ENCODE measurements at regions of chr1 and their contacts with region 1.

Region 1: DNA sequence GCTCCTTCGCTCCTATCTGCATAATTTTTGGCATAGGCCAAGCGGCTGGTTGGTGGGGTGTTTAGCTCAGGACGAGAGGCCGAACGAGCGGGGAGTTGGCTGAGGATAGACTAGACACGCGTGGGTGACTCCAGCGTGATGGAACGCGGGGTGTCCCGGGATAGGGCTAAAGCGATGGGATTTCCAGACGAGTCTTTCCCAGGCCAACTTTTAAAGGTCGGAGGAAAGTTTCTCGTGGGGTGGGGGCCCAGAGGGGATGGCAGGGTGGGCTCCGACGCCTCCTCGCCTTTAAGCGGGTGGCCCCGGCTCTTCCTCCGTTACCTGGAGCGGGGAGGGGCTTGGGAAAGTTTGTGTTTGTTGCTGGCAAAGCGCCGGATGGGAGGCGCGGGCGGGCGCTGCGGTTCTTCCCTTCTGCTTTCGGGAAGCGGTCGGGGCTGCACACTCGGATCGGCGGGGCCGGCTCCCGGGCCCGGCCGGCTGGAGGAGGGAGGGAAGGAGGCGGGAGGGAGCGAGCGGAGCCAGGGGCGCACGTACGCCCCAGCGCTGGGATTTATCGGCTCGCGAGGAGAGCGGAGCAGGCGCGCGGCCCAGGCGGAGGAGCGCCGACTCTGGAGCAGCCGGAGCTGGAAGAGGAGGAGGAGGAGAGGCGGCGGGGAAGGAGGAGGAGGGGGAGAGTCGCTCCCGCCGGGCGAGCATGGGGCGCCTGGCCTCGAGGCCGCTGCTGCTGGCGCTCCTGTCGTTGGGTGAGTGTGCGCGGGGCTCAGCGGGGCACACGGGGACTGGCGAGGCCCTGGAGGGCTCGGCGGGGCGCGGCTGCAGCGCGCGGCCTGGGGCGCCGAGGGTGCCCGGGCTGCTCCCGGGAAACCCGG is at the start of gene PTGFRN:
- DNase-seq: peak; percentile 65
- H3K4me3 Mint-ChIP-seq: no peak within 1 kb of the TSS
- H3K27ac Mint-ChIP-seq: peak within 1 kb of the TSS; percentile 62
- H3K4me1 Mint-ChIP-seq: no peaks in the 10 kb centered on the region
- H3K27me3 Mint-ChIP-seq: no peaks in the 10 kb centered on the region
- CTCF ChIP-seq: no peak
- total RNA-seq, gene PTGFRN: 29.4 and 44.6 TPM in 2 replicates

Region 2: DNA sequence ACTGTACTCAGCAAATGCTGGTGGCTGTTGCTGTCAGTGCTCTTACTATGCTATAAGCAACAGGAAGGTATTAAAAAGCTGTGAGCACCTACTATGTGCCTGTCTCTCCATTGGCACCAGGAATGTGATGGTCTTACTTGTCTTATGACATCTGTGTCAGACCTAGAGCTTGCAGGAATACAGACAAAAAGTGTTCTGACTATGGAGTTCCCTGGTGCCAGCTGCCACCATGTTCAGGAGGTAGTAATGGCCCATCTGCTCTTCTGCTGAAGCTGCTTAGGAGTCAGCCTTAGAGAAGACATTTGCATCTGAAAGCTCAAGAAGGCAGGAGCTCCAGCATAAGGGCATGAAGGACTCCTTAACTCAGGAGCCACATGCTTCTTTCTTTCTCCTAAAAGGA is 746.2 kb before region 1 on chr1:
- CTCF ChIA-PET with region 1: interaction called, 10 read pairs
- intact Hi-C with region 1: no loop called
- DNase-seq: no peak
- H3K4me3 Mint-ChIP-seq: no peak overlapping the region
- H3K27ac Mint-ChIP-seq: no peak overlapping the region
- H3K4me1 Mint-ChIP-seq: peaks cover under 1% of the 10 kb centered on the region
- H3K27me3 Mint-ChIP-seq: no peaks in the 10 kb centered on the region
- CTCF ChIP-seq: no peak

Region 3: DNA sequence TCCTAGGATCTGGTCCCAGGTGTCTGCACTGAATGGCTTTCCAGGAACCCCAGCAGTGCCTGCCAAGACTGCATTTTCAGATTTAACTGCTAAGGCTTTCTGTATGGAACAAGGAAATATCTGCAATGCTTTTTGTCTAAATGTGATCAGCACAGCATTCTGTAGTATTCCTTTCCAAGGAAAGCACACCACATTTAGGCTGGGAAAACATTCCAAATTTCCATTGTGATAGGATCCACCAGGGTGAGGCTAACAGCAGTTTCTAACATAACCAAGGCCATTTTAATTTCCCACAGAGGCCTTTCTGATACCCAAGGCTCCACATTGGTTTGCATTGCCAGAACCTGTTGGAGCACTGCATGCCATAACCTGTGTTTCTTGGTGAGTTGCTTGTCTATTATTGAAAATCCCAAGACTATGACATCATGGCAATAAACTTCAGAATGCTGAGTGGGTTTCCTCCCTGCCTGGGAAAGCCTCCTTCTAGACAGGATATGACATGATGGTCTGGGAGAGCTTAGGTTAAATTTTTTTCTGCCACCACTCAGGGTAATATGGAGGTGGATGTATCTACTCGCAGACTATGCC is 23.4 kb before region 1 on chr1:
- CTCF ChIA-PET with region 1: no interaction called
- intact Hi-C with region 1: no loop called
- DNase-seq: no peak
- H3K4me3 Mint-ChIP-seq: no peak overlapping the region
- H3K27ac Mint-ChIP-seq: no peak overlapping the region
- H3K4me1 Mint-ChIP-seq: no peaks in the 10 kb centered on the region
- H3K27me3 Mint-ChIP-seq: no peaks in the 10 kb centered on the region
- CTCF ChIP-seq: no peak

Region 4: GRCh38 chr1:117121776-117122697 is 212.3 kb after region 1 on chr1:
- CTCF ChIA-PET with region 1: no interaction called
- intact Hi-C with region 1: no loop called
- DNase-seq: peak; percentile 91
- H3K4me3 Mint-ChIP-seq: peak overlapping the region; percentile 85
- H3K27ac Mint-ChIP-seq: peak overlapping the region; percentile 64
- H3K4me1 Mint-ChIP-seq: peaks cover 19% of the 10 kb centered on the region
- H3K27me3 Mint-ChIP-seq: no peaks in the 10 kb centered on the region
- CTCF ChIP-seq: peak; percentile 66

Measured in Calu3 (cell line).